ENCODE measurements at regions of chr1 and their contacts with region 1.

Region 1: DNA sequence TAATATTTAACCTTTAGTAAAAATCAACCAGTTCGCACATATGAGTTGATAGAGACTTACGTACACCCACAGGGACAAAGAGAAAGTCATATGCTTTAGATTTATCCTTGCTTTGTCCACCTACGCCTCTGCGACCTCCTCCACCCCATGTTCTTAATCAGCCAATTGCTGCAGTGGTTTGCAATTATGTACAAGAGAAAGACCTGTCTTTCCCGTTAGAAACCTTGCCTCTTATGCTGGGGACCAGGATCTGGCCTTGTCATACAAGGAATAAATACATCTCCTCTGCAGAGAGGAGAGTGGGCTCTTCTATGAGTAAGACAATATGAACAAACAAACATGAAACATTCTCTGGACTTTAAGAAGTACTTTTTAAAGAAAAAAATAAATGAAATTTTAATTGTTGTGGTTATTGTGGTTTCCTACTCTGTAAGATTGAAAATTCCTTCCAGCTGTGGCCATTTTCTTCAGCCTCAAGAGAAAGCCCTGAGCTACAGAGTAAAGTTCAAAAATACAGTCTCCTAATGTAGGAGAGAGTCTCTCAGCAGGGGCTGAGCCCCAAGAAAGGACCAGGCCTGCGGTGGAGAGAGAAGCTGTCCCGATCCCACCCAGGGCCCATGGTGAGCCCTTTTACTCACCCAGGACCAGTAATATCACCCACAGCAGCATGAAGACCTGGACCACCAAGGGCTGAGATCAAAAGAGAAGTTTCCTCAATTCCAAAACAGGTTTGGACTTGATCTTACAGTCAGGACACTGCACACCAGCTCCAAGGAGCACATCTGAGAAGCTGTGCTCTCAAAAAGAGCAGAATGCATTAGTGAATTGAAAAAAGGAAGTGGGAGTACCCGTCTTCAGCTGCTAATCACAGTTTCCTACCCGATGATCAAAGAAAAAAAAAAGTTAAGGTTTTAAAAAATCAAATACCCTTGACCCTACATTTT is at the start of gene FCRL5:
- DNase-seq: no peak
- ATAC-seq: peak; percentile 87
- H3K4me3 Mint-ChIP-seq: peak within 1 kb of the TSS; percentile 88
- H3K27ac Mint-ChIP-seq: peak within 1 kb of the TSS; percentile 88
- H3K4me1 Mint-ChIP-seq: peaks cover 66% of the 10 kb centered on the region
- H3K27me3 Mint-ChIP-seq: no peaks in the 10 kb centered on the region
- CTCF ChIP-seq: no peak
- total RNA-seq, gene FCRL5: 40.4 and 55.4 TPM in 2 replicates

Region 2: GRCh38 chr1:157448636-157449035 is 103.3 kb before region 1 on chr1:
- CTCF ChIA-PET with region 1: no interaction called
- POLR2A ChIA-PET with region 1: no interaction called
- intact Hi-C with region 1: no loop called
- DNase-seq: no peak
- ATAC-seq: no peak
- H3K4me3 Mint-ChIP-seq: no peak overlapping the region
- H3K27ac Mint-ChIP-seq: no peak overlapping the region
- H3K4me1 Mint-ChIP-seq: no peaks in the 10 kb centered on the region
- H3K27me3 Mint-ChIP-seq: no peaks in the 10 kb centered on the region
- CTCF ChIP-seq: no peak

Region 3: DNA sequence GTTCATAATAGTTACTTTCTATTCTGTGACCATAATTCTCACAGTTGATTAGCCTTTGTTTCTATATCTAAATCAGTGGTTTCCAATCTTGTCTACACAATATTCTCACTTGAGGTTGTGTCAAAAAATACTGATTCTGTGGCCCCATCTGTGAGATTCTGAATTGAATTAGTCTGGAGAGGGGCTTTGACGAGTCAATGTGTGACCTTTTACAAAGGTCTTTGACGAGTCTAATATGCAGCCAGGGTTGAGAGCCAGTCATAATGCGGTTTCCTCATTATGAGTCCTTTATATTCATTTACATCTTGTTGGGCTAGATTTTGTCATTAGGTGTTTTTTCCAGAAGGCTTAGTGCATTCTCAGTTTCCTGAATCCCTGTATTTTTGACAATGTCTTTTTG is 19.4 kb before region 1 on chr1:
- CTCF ChIA-PET with region 1: no interaction called
- POLR2A ChIA-PET with region 1: no interaction called
- intact Hi-C with region 1: no loop called
- DNase-seq: no peak
- ATAC-seq: no peak
- H3K4me3 Mint-ChIP-seq: no peak overlapping the region
- H3K27ac Mint-ChIP-seq: no peak overlapping the region
- H3K4me1 Mint-ChIP-seq: peaks cover 28% of the 10 kb centered on the region
- H3K27me3 Mint-ChIP-seq: no peaks in the 10 kb centered on the region
- CTCF ChIP-seq: no peak

Region 4: DNA sequence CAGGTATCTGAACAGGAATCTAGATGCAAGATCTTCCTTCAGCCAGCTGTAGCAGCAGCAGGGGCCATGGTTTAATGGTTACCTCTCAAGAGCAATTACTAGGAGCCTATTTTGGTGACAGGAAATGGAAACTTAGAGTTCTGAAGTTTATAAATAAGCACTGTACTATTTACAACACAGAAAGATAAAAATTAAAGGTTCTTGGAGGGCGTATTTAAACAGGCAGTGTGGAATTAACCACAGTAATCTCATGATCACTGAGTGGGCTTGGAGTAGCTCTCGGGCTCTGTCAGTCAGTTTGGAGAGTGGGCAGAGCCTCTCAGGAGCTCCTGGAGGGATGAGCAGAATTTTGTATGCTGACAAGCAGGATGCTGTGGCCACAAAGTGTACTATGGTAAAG is 10.5 kb after region 1 on chr1:
- CTCF ChIA-PET with region 1: interaction called, 4 read pairs
- POLR2A ChIA-PET with region 1: interaction called, 5 read pairs
- intact Hi-C with region 1: loop called (anchors 1 kb)
- DNase-seq: no peak
- ATAC-seq: peak; percentile 29
- H3K4me3 Mint-ChIP-seq: peak overlapping the region; percentile 65
- H3K27ac Mint-ChIP-seq: peak overlapping the region; percentile 73
- H3K4me1 Mint-ChIP-seq: peaks cover 70% of the 10 kb centered on the region
- H3K27me3 Mint-ChIP-seq: no peaks in the 10 kb centered on the region
- CTCF ChIP-seq: no peak

Region 5: DNA sequence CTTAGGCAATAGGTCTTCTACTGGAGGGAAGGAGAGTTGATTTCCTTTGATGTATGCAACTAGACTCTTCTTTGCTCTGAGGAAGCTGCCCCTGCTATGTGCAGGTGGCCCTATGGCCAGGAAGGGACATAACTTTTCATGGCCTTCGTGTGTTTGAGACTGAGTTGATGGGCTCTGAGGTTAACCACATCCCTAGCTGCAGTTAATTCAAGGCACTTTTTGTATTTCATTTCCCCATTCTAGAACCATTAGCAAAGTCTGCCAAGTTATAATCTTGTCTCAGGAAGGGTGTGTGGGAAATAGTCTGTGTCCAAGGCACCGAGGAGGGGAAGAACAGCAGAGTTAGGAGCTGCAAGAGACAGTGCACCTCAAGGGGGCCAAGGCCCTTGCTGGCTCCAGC is 43.4 kb after region 1 on chr1:
- CTCF ChIA-PET with region 1: no interaction called
- POLR2A ChIA-PET with region 1: interaction called, 3 read pairs
- intact Hi-C with region 1: loop called (anchors 2 kb)
- DNase-seq: no peak
- ATAC-seq: peak; percentile 53
- H3K4me3 Mint-ChIP-seq: peak overlapping the region; percentile 62
- H3K27ac Mint-ChIP-seq: peak overlapping the region; percentile 30
- H3K4me1 Mint-ChIP-seq: peaks cover 71% of the 10 kb centered on the region
- H3K27me3 Mint-ChIP-seq: no peaks in the 10 kb centered on the region
- CTCF ChIP-seq: no peak